Kidney (tissue), 22 donors: ENCODE measurements at regions of chr13 and their contacts with region 1.

Region 1: DNA sequence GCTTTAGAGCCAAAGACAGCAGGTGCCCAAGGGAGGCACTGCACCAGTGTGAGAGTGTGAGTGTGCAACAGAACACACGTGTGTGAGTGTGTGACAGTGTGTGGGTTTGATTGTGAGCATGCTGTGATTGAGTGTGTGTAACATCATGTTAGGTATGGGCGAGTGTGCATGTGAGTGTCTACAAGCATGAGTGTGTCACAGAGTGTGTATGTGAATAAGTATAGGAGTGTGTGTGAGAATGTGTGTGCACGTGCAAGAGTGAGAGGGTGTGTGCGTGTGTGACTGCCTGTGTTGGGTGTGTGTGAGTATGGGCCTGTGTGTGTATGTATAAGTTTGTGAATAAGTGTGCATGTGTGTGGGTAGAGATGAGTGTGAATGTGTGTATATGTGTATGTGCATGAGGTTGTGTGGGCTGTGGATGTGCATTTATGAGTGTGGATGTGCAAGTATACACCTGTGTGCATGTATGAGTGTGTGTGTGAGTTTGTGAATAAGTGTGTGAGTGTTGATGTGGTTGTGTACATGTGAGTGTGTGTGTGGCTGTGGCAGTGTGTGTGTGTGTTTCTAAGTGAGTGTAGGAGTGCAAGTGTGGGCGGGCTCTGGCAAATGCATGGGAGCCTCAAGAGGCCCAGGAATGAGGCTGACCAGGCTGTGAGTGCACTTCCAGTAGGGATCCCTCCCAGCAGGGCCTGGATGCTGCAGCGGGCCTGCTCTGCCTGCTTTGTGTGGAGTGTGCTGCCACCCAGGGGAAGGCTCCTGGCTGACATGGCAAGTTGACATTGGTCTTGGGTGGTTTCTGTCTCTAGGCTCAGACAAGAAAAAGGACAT is 198.4 kb downstream of the COL4A1 start:
- DNase-seq: peak in 4 of 5 donors; percentile 82 to 89 (median 85)
- H3K4me3 ChIP-seq: no peak overlapping the region
- H3K27ac ChIP-seq: no peak overlapping the region
- H3K4me1 ChIP-seq: no peaks in the 10 kb centered on the region
- H3K27me3 ChIP-seq: no peaks in the 10 kb centered on the region
- CTCF ChIP-seq: peak; percentile 63

Region 2: GRCh38 chr13:108961542-108962125 is 1146.9 kb before region 1 on chr13:
- intact Hi-C with region 1: loop called (anchors 10 kb)
- DNase-seq: peak in 2 of 5 donors; percentile 61 to 74
- H3K4me3 ChIP-seq: no peak overlapping the region
- H3K27ac ChIP-seq: no peak overlapping the region
- H3K4me1 ChIP-seq: no peaks in the 10 kb centered on the region
- H3K27me3 ChIP-seq: no peaks in the 10 kb centered on the region
- CTCF ChIP-seq: peak; percentile 69